Cardiac septum (tissue), 1 donor: ENCODE measurements at regions of chr11 and their contacts with region 1.

Region 1: GRCh38 chr11:43895601-43896000 is 15.0 kb downstream of the ALKBH3 start:
- DNase-seq: no peak

Region 2: GRCh38 chr11:43145653-43146052 is 749.9 kb before region 1 on chr11:
- intact Hi-C with region 1: no loop called
- DNase-seq: no peak

Region 3: DNA sequence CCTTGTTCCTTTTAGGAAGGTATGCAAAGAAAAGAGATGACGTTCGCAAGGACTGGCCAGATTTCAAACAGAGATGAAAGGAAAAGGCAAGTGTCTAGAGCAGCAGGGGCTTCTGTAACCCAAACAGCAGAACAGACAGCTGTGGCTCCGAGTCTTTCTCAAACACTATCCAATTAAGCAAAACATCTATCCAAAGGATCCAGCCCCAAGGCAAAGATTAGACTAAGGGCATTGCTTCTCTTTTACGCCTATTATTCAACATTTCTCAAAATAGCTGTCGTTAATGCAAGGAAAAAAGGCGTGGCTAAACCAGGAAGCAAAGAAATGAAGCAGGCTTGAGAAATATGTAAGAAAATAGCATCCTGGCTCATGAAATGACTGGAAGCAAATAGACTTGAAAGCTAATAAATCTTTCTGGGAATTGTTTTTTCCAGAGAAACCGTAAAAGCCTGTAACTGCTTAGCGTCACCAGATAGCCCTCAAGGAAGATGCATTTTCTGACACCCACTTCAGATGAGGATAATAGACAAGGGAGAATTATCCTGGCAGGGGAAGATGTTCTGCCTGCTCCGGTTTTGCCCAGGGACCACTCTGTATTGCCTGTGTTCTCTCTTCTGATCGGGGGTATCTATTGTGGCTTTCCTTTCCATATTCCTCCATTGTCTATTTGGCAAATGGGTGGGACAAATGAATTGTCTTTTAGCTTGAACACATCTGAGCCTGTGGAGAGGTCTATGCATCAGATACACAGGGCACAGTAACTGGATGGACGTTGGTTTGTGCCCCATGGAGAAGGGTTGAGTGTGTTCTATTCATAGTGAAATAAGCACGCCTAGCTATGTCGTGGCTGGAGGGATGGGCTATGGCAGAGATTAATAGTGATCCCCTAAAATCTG is 67.0 kb after region 1 on chr11:
- intact Hi-C with region 1: no loop called
- DNase-seq: no peak

Region 4: DNA sequence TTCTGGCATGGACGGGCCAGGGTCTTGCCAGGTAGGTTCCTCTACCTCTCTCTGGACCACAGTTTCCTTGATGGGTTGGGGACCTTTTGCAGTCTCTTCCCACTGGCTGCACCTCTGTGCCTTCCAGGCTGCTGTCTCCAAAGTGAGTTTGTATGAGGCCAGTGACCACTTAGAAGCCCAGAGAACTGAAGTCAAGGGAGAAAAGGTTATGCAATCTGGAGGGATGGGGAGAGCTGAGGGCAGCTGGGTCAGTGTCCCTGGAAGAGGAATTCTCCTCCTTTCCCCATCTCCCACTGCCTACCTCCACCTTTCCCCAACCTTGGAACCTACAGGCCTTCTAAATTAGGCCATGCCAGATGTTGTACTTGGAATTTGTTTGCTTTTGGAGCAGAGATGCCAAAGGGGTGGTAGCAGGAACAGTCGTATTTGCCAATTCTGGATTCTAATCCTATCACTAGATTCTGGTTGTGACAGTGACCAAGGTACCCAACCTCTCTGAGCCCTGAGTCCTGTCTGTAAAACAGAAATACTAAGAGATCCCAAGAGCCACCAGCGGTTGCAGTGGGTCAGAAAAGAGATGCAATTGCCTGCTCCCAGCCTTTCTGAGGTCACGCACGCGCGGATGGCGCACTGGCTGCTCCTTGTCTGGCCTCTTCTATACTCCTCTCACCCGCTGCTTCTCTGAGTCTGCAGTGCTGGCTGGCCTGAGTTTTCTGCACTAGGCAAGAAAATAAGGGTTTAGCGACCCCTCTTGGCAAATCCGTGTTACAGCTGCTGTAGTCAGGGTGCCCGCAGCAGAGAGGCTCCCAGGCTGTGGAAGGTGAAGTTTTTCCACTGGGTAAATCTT is 141.4 kb after region 1 on chr11:
- intact Hi-C with region 1: loop called (anchors 1 kb)
- DNase-seq: peak; percentile 87